CD4-positive, alpha-beta T cell (primary cell): ENCODE measurements at regions of chr5 and their contacts with region 1.

Region 1: GRCh38 chr5:80255732-80256479 is at the start of gene SERINC5:
- DNase-seq: peak; percentile 70 to 92 (median 82)
- ATAC-seq: peak; percentile 67
- H3K4me3 ChIP-seq: peak within 1 kb of the TSS; percentile 99
- H3K4me3 Mint-ChIP-seq: peak within 1 kb of the TSS; percentile 94
- H3K27ac ChIP-seq: peak within 1 kb of the TSS; percentile 88 to 89
- H3K27ac Mint-ChIP-seq: peak within 1 kb of the TSS; percentile 92
- H3K4me1 ChIP-seq: peaks cover 53% of the 10 kb centered on the region
- H3K4me1 Mint-ChIP-seq: peaks cover 66% of the 10 kb centered on the region
- H3K27me3 ChIP-seq: no peaks in the 10 kb centered on the region
- H3K27me3 Mint-ChIP-seq: no peaks in the 10 kb centered on the region
- CTCF ChIP-seq: no peak
- total RNA-seq, gene SERINC5: 115 to 123 TPM

Region 2: GRCh38 chr5:80125962-80126480 is 129.9 kb before region 1 on chr5:
- CTCF ChIA-PET with region 1: no interaction called
- POLR2A ChIA-PET with region 1: interaction called, 10 read pairs
- intact Hi-C with region 1: loop called in 1 of 2 experiments (anchors 2 kb)
- DNase-seq: peak in 4 of 14 experiments; percentile 50 to 75 (median 62)
- ATAC-seq: peak; percentile 83
- H3K4me3 ChIP-seq: no peak overlapping the region
- H3K4me3 Mint-ChIP-seq: peak overlapping the region; percentile 1
- H3K27ac ChIP-seq: peak overlapping the region in 1 of 2 donors; percentile 35
- H3K27ac Mint-ChIP-seq: peak overlapping the region; percentile 60
- H3K4me1 ChIP-seq: peaks cover 38% of the 10 kb centered on the region
- H3K4me1 Mint-ChIP-seq: peaks cover 57% of the 10 kb centered on the region
- H3K27me3 ChIP-seq: no peaks in the 10 kb centered on the region
- H3K27me3 Mint-ChIP-seq: no peaks in the 10 kb centered on the region
- CTCF ChIP-seq: no peak

Region 3: GRCh38 chr5:80153586-80154126 is 102.2 kb before region 1 on chr5:
- CTCF ChIA-PET with region 1: no interaction called
- POLR2A ChIA-PET with region 1: interaction called, 23 read pairs
- intact Hi-C with region 1: no loop called
- DNase-seq: peak in 11 of 14 experiments; percentile 19 to 67 (median 48)
- ATAC-seq: peak; percentile 69
- H3K4me3 ChIP-seq: no peak overlapping the region
- H3K4me3 Mint-ChIP-seq: peak overlapping the region; percentile 73
- H3K27ac ChIP-seq: peak overlapping the region; percentile 48 to 56
- H3K27ac Mint-ChIP-seq: peak overlapping the region; percentile 98
- H3K4me1 ChIP-seq: peaks cover 51% of the 10 kb centered on the region
- H3K4me1 Mint-ChIP-seq: peaks cover 86% of the 10 kb centered on the region
- H3K27me3 ChIP-seq: no peaks in the 10 kb centered on the region
- H3K27me3 Mint-ChIP-seq: no peaks in the 10 kb centered on the region
- CTCF ChIP-seq: no peak

Region 4: GRCh38 chr5:80191991-80192398 is 63.9 kb before region 1 on chr5:
- CTCF ChIA-PET with region 1: interaction called, 3 read pairs
- POLR2A ChIA-PET with region 1: interaction called, 120 read pairs
- intact Hi-C with region 1: loop called in 1 of 2 experiments (anchors 5 kb)
- DNase-seq: peak; percentile 28 to 72 (median 46)
- ATAC-seq: peak; percentile 60
- H3K4me3 ChIP-seq: peak overlapping the region; percentile 31
- H3K4me3 Mint-ChIP-seq: peak overlapping the region; percentile 61
- H3K27ac ChIP-seq: peak overlapping the region; percentile 74 to 86
- H3K27ac Mint-ChIP-seq: peak overlapping the region; percentile 94
- H3K4me1 ChIP-seq: peaks cover 93% of the 10 kb centered on the region
- H3K4me1 Mint-ChIP-seq: peaks cover 89% of the 10 kb centered on the region
- H3K27me3 ChIP-seq: no peaks in the 10 kb centered on the region
- H3K27me3 Mint-ChIP-seq: no peaks in the 10 kb centered on the region
- CTCF ChIP-seq: no peak

Region 5: DNA sequence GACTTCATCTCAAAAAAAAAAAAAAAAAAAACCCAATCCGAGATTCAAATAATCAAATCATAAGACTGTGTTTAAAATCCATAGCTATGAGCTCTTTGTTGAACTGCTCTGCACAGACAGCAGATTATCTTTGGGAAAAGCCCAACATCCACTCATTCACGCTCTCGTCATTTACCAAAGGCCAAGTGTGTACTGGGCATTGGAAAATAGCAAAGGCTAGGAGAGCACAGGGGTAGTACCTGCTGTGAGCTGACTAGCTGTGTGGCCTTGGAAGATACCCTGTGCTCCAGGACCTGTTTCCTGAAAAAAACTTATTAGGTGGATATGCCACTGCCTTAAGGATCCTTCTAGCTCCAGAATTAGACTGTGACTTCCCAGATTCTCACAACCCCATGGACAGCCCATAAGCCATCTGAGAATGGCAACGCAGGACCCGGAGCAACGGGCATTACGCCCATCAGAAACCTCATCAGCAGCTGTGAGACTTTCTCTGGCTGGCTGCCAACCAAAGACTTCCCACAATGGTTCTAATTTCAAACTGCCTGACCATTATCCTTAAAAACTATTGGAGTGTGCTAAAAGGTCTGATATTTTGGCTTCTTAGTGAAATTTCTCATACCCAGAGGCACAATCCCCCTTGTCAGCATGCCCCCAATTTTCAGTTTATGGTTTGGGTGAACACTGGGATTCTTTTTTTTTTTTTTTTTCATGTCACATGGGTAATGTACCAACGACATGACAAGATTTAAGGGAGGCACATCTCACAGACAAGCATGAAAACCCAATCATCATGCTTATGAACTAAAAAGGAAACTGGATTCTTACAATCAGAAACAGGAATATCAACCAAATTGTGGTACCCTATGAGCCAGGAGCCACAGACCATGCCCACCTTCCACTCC is 16.9 kb before region 1 on chr5:
- CTCF ChIA-PET with region 1: interaction called, 3 read pairs
- POLR2A ChIA-PET with region 1: interaction called, 52 read pairs
- intact Hi-C with region 1: loop called in 1 of 2 experiments (anchors 2 kb)
- DNase-seq: peak in 3 of 14 experiments; percentile 49 to 58 (median 53)
- ATAC-seq: peak; percentile 27
- H3K4me3 ChIP-seq: peak overlapping the region; percentile 4
- H3K4me3 Mint-ChIP-seq: peak overlapping the region; percentile 80
- H3K27ac ChIP-seq: peak overlapping the region; percentile 6 to 32
- H3K27ac Mint-ChIP-seq: peak overlapping the region; percentile 70
- H3K4me1 ChIP-seq: peaks cover 55% of the 10 kb centered on the region
- H3K4me1 Mint-ChIP-seq: peaks cover 80% of the 10 kb centered on the region
- H3K27me3 ChIP-seq: no peaks in the 10 kb centered on the region
- H3K27me3 Mint-ChIP-seq: no peaks in the 10 kb centered on the region
- CTCF ChIP-seq: no peak

Region 6: GRCh38 chr5:80300125-80300524 is 44.2 kb after region 1 on chr5:
- CTCF ChIA-PET with region 1: no interaction called
- POLR2A ChIA-PET with region 1: no interaction called
- intact Hi-C with region 1: no loop called
- DNase-seq: no peak
- ATAC-seq: no peak
- H3K4me3 ChIP-seq: no peak overlapping the region
- H3K4me3 Mint-ChIP-seq: no peak overlapping the region
- H3K27ac ChIP-seq: no peak overlapping the region
- H3K27ac Mint-ChIP-seq: no peak overlapping the region
- H3K4me1 ChIP-seq: no peaks in the 10 kb centered on the region
- H3K4me1 Mint-ChIP-seq: no peaks in the 10 kb centered on the region
- H3K27me3 ChIP-seq: no peaks in the 10 kb centered on the region
- H3K27me3 Mint-ChIP-seq: no peaks in the 10 kb centered on the region
- CTCF ChIP-seq: no peak